Dendritic cell treated with granulocyte-macrophage colony-stimulating factor and Interleukin-4, amounts not matched to agents 40 ng/mL and 50 ng/mL, for 4 days (primary cell): ENCODE measurements at regions of chr4 and their contacts with region 1.

Region 1: DNA sequence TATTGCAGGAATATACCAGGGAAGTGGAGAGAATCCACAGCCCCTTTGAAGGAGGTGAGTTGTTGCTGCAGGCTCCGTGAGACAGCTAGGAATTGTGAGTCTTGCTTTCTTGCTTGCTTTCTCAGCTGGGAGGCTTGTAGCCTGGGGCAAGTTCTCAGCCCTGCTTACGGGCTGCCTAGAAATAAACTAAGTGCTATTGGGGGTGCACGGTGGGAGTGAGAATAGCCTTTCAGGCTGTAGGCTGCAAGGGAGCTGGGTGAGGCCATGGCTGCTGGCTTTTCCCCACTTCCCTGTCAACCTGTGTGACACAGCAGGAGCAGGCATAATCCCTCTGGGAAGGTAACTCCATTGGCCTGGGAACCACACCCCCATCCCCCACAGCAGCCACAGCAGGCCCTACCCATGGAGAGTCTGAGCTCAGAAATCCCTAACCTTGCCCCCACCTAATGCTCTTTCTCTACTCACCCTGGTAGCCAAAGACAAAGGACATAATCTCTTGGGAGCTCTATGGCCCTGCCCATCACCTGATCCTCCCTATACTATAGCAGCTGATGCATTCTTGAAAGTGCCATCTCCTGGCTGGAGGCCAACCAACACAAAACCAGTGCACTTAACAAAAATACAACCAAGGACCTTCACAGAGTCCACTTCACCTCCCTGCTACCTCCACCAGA is 113.0 kb downstream of the MMRN1 start:
- H3K4me3 Mint-ChIP-seq: no peak overlapping the region
- H3K27ac Mint-ChIP-seq: no peak overlapping the region
- H3K4me1 Mint-ChIP-seq: no peaks in the 10 kb centered on the region
- H3K27me3 Mint-ChIP-seq: no peaks in the 10 kb centered on the region

Region 2: GRCh38 chr4:89981789-89982334 is 25.8 kb before region 1 on chr4:
- intact Hi-C with region 1: loop called (anchors 1 kb)
- H3K4me3 Mint-ChIP-seq: no peak overlapping the region
- H3K27ac Mint-ChIP-seq: no peak overlapping the region
- H3K4me1 Mint-ChIP-seq: no peaks in the 10 kb centered on the region
- H3K27me3 Mint-ChIP-seq: no peaks in the 10 kb centered on the region